Activated CD4-positive, alpha-beta memory T cell treated with anti-CD3 and anti-CD28 coated beads for 36 hours (primary cell): ENCODE measurements at regions of chr16 and their contacts with region 1.

Region 1: GRCh38 chr16:2142942-2143877 is 5.2 kb upstream of the RAB26 start:
- DNase-seq: peak; percentile 29
- H3K4me3 Mint-ChIP-seq: no peak overlapping the region
- H3K27ac Mint-ChIP-seq: no peak overlapping the region
- H3K4me1 Mint-ChIP-seq: peaks cover 2% of the 10 kb centered on the region
- H3K27me3 Mint-ChIP-seq: no peaks in the 10 kb centered on the region

Region 2: DNA sequence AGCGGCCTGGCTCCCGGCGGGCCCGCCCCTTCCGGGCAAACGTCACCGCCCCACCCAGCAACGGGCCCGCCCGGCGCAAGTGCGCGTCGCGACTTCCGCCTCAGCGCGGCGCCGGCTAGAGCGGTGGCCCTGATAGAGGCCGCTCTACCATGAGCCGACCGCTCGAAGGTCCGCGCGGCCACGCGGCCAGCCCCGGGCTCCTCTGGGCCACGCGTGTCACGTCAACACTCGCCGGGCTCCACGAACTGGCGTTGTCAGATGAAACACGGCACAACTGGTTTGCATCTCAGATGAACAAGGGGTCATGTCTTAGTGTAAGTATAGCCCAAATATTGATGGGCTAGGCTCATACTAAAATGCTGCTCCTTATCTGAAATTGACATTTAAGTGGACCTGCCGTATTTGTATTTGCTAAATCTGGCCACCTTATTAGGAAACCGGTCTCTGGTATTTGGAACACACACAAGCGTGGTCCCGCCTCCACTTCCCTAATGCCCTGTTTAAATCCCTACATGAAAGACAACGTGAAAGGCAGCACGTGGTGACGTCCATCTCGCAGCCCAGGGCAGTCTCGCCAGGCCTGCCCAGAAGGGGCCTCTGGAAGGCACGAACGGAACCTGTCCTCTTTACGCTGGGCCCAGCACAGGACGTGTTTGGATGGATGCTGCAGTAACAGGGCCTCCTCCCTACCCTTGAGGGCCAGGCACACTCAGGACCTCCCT is 133.3 kb before region 1 on chr16 and contains the start of gene ZNF598:
- CTCF ChIA-PET with region 1: interaction called, 25 read pairs
- POLR2A ChIA-PET with region 1: no interaction called
- intact Hi-C with region 1: no loop called
- DNase-seq: peak; percentile 82
- H3K4me3 Mint-ChIP-seq: peak within 1 kb of the TSS; percentile 84
- H3K27ac Mint-ChIP-seq: peak within 1 kb of the TSS; percentile 83
- H3K4me1 Mint-ChIP-seq: peaks cover 35% of the 10 kb centered on the region
- H3K27me3 Mint-ChIP-seq: no peaks in the 10 kb centered on the region
- total RNA-seq, gene ZNF598: 67.2 to 67.6 TPM

Region 3: DNA sequence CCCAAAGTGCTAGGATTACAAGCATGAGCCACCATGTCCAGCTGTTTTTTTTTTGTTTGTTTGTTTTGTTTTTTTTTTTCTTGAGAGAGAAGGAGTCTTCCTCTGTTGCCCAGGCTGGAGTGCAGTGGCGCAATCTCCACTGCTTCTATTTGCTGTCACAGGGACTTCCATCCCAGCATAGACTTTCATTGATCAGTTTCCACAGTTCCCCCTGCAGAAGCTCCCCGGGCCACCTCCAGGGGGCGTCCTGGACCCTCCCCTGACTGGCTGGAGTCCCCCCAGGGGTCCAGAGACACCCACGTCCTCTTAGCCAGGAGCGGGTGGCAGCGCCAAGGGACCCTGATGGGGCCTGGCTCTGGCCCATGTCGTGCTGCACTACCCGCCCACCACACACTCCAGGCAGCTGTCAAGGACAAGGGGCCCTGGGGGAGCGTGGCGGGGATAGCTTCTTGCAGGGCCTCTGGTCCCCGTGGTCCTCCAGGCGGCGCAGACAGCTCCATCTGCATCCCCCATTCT is 126.7 kb before region 1 on chr16:
- CTCF ChIA-PET with region 1: interaction called, 37 read pairs
- POLR2A ChIA-PET with region 1: no interaction called
- intact Hi-C with region 1: no loop called
- DNase-seq: peak; percentile 38
- H3K4me3 Mint-ChIP-seq: no peak overlapping the region
- H3K27ac Mint-ChIP-seq: no peak overlapping the region
- H3K4me1 Mint-ChIP-seq: peaks cover 4% of the 10 kb centered on the region
- H3K27me3 Mint-ChIP-seq: peaks cover 19% of the 10 kb centered on the region

Region 4: GRCh38 chr16:2023098-2023925 is 119.9 kb before region 1 on chr16:
- CTCF ChIA-PET with region 1: interaction called, 37 read pairs
- POLR2A ChIA-PET with region 1: no interaction called
- intact Hi-C with region 1: loop called (anchors 1 kb)
- DNase-seq: peak; percentile 96
- H3K4me3 Mint-ChIP-seq: peak overlapping the region; percentile 58
- H3K27ac Mint-ChIP-seq: no peak overlapping the region
- H3K4me1 Mint-ChIP-seq: peaks cover 17% of the 10 kb centered on the region
- H3K27me3 Mint-ChIP-seq: peaks cover 34% of the 10 kb centered on the region